Ascending aorta (tissue), 2 donors: ENCODE measurements at regions of chr18 and their contacts with region 1.

Region 1: DNA sequence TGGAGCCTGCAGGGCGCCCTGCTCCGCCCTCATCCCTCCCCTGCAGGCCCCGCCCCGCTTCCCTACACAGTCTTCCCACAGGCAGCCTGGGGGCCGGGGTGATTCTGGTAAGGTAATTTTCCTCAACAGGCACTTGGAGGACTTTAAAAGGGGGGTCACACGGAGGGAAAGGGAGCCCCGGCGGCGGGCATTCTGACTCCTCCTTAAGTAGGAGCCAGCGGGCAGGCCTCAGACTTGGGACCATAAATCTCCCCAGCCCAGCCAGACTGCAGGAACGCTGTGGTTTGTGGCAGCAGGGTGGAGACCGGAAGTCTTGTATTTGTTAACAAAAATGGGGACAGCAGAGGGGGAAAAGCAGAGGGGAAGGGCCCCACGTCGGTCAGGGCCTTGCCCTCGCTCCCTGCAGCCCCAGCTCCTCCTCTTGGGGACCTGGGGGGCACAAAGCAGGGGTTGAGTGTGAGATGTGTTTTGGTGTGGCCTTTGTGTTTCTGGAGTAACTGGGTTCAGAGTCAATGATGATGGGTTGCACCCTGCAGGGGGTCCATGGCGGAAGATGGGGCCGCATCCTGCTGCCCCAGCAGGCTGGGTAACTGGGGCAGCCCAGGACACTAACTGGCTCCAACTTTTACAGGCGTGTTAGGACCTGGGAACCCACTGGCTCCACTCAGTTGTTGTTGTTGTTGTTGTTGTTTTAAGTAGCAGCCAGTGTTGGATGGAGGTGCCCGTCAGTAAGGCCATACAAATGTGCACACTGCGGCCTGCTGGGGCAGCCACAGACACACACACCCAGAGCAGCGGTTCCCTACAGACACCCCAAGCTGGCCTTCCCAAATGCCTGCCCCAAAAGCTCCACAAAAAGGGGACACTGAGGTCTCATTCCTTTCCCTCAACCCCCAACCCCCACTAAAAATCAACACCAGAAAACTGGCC is 27.7 kb downstream of the SMAD7 start:
- DNase-seq: peak in 1 of 2 donors; percentile 86
- H3K4me3 ChIP-seq: peak overlapping the region; percentile 52 to 55
- H3K27ac ChIP-seq: peak overlapping the region; percentile 97 to 99
- H3K4me1 ChIP-seq: peaks cover 38 to 81% of the 10 kb centered on the region in 2 donors
- H3K27me3 ChIP-seq: no peaks in the 10 kb centered on the region
- CTCF ChIP-seq: no peak

Region 2: DNA sequence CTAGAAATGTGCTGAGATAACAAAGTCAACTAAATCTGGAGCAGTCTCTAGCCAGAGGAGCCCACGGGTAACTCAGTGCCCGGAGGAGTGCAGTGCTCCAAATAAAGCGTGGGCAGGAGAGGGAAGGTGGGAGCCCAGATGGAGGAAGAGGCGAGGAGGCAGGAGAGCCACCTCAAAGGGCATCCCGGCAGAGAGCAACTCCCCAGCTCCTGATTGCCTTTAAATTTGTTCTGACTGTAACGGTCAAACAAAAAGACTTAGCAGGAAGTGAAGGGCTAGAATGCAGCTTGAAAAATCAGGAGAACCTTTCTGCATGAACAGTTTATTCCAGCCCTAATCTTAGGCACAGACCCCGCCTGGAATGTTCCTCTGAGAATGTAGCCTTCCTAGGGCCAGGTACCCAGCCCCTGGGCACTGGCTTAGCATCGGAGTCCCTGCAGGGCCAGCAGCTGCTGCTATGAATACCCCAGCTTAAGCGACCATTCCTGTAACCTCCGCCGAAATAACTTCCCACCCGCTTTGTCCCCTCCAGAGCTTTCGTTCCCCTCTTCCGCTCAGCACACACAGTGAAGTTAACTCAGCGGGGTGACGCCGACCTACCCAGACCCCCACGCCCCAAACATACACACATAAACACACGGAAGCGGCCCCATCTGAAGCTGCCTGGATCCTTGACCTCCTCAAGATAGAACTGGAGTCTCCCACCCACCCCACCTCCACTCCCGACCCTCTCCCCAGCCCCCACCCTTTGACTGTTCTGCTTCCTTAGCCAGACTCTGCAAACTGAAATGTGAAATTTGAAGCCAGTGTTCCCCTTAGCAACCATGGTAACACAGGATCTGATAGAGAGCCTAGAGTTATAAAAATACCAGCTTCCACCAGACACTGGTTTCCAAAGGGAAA is 95.5 kb before region 1 on chr18:
- intact Hi-C with region 1: loop called (anchors 5 kb)
- DNase-seq: peak in 1 of 2 donors; percentile 65
- H3K4me3 ChIP-seq: peak overlapping the region; percentile 16 to 56
- H3K27ac ChIP-seq: peak overlapping the region; percentile 85
- H3K4me1 ChIP-seq: peaks cover 10 to 73% of the 10 kb centered on the region in 2 donors
- H3K27me3 ChIP-seq: no peaks in the 10 kb centered on the region
- CTCF ChIP-seq: no peak

Region 3: GRCh38 chr18:48875942-48876511 is 47.0 kb before region 1 on chr18:
- intact Hi-C with region 1: no loop called
- DNase-seq: no peak
- H3K4me3 ChIP-seq: no peak overlapping the region
- H3K27ac ChIP-seq: no peak overlapping the region
- H3K4me1 ChIP-seq: peaks cover 12 to 36% of the 10 kb centered on the region in 2 donors
- H3K27me3 ChIP-seq: no peaks in the 10 kb centered on the region
- CTCF ChIP-seq: peak in 2 of 3 experiments; percentile 12 to 34

Region 4: GRCh38 chr18:48902023-48902855 is 20.8 kb before region 1 on chr18:
- intact Hi-C with region 1: loop called (anchors 2 kb)
- DNase-seq: peak; percentile 82 to 98
- H3K4me3 ChIP-seq: no peak overlapping the region
- H3K27ac ChIP-seq: peak overlapping the region; percentile 94
- H3K4me1 ChIP-seq: peaks cover 13 to 26% of the 10 kb centered on the region in 2 donors
- H3K27me3 ChIP-seq: no peaks in the 10 kb centered on the region
- CTCF ChIP-seq: no peak

Region 5: GRCh38 chr18:48983771-48984355 is 60.8 kb after region 1 on chr18:
- intact Hi-C with region 1: no loop called
- DNase-seq: no peak
- H3K4me3 ChIP-seq: no peak overlapping the region
- H3K27ac ChIP-seq: no peak overlapping the region
- H3K4me1 ChIP-seq: peaks cover 3 to 7% of the 10 kb centered on the region in 2 donors
- H3K27me3 ChIP-seq: no peaks in the 10 kb centered on the region
- CTCF ChIP-seq: no peak

Region 6: GRCh38 chr18:49021433-49022129 is 98.5 kb after region 1 on chr18:
- intact Hi-C with region 1: no loop called
- DNase-seq: peak in 1 of 2 donors; percentile 67
- H3K4me3 ChIP-seq: no peak overlapping the region
- H3K27ac ChIP-seq: no peak overlapping the region
- H3K4me1 ChIP-seq: peaks cover 3 to 11% of the 10 kb centered on the region in 2 donors
- H3K27me3 ChIP-seq: no peaks in the 10 kb centered on the region
- CTCF ChIP-seq: peak in 2 of 3 experiments; percentile 11 to 37